Activated T-helper 1 cell treated with anti-CD3 and anti-CD28 coated beads, Interleukin-12 subunit alpha, Interleukin-12 subunit beta, Interleukin-2, Interleukin-4 antibody, amounts not matched to agents 30 ng/mL and 10 ng/mL and 1 ng/mL, durations not matched to agents 14 hours and 24 hours and 36 hours (primary cell): ENCODE measurements at regions of chr1 and their contacts with region 1.

Region 1: DNA sequence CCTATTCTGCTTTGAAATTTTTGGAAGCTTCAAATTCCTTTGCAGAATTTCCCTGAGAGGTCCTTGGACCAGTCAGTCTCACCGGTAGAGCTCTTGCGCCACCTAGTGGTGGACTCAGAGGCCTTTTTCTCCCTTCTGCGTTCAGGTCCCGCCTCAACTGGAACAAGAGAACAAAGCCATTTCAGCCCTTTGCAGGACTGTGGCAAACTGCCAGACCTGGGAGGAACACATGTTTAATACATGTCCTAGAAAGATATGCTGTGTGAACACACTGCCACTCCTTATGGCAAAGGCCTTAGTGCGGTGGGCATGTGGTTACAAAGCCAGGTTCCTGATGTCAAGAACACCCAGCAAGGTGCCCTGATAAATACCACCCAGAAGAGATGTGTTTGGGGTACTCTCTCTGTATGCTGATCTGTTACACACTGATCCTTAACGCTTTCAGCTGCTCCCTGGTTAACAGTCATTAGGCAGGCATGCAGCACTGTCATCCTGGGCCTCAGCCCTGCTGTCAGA is 82.2 kb upstream of the SSX2IP start:
- DNase-seq: peak; percentile 48
- H3K4me3 Mint-ChIP-seq: no peak overlapping the region
- H3K27ac Mint-ChIP-seq: no peak overlapping the region
- H3K4me1 Mint-ChIP-seq: peaks cover 6% of the 10 kb centered on the region
- H3K27me3 Mint-ChIP-seq: peaks cover 21% of the 10 kb centered on the region

Region 2: DNA sequence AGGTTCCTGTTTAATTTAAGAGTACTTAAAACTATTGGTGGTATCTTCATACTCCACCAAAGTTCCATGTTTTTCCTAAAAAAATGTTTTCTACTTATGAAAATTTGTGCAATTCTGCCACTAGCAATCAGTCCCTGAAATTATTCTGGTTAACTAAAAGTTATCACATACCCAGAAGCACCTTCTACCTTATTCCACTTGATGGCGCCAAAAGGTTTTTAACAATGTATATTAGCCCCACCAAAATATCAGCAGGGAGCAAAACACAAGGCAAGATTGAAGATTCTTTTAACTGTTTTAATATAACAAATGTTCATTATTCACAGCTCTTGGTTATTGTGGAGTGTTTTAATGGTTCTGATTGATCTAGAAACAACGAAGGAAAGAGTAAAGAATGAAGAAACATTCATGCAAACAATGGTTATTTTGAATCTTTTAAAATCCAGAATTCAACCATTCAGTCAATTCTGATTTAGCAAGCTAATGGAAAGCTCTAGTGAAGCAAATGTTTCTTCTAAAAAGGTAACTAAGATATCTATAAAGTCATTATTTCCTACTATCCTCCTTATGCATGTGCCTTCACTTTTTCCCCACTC is 840.7 kb before region 1 on chr1:
- intact Hi-C with region 1: loop called (anchors 1 kb)
- DNase-seq: no peak
- H3K4me3 Mint-ChIP-seq: no peak overlapping the region
- H3K27ac Mint-ChIP-seq: no peak overlapping the region
- H3K4me1 Mint-ChIP-seq: no peaks in the 10 kb centered on the region
- H3K27me3 Mint-ChIP-seq: peaks cover 8% of the 10 kb centered on the region

Region 3: DNA sequence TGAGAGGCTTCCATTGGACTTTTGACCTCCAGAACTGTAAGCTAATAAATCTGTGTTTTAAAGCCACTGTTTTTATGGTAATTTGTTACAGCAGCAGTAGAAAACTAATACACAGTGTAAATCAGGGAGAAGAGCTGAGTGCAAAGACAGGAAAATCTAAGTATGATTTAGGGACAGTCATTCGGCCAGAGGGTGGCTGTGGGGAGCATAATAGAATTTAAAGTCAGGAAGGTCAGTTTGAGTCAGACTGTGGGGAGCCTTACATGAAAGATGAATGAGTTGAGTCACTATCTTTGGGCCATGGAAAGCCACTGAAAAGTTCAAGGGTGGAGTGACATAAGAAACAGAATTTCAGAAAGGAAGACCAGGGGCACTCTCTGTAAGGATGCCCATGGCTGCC is 29.8 kb before region 1 on chr1:
- intact Hi-C with region 1: no loop called
- DNase-seq: no peak
- H3K4me3 Mint-ChIP-seq: no peak overlapping the region
- H3K27ac Mint-ChIP-seq: no peak overlapping the region
- H3K4me1 Mint-ChIP-seq: no peaks in the 10 kb centered on the region
- H3K27me3 Mint-ChIP-seq: peaks cover 10% of the 10 kb centered on the region

Region 4: DNA sequence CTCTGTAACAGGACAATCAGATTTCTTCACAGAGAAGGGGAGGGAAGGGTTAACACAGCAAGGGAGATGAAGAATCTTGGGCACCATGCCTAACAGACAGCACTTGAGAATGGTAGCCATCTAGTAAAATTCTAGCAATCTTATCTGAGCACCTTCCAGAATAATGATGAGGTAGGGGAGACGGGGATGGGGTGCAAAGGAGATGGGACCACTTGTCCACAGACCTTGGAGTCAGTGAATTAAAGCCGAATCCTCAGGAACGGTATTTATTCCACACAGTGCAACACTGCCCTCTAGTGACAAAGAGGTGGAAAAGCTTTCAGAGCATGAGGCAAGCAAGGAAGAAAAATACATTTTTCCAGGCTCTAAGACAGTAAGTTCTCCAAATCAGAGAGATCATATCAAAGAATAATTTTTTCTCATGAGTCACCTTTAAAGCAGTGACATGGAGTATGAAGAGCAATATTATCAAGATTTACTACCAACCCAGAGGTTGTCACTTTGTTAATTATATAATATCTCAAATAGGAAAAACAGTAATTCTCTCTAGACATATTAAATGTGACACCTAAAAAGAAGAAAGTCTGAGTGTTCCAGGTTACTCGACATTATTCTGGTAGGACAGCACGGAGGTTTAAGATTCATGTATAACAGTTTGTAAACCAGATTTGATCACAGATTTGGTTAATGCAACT is 163.8 kb after region 1 on chr1:
- intact Hi-C with region 1: loop called (anchors 2 kb)
- DNase-seq: peak; percentile 26
- H3K4me3 Mint-ChIP-seq: no peak overlapping the region
- H3K27ac Mint-ChIP-seq: no peak overlapping the region
- H3K4me1 Mint-ChIP-seq: peaks cover 7% of the 10 kb centered on the region
- H3K27me3 Mint-ChIP-seq: no peaks in the 10 kb centered on the region